Activated CD8-positive, alpha-beta memory T cell treated with anti-CD3 and anti-CD28 coated beads, Interleukin-2, amount 10 ng/mL, durations not matched to agents 7 days and 5 days (primary cell): ENCODE measurements at regions of chr21 and their contacts with region 1.

Region 1: DNA sequence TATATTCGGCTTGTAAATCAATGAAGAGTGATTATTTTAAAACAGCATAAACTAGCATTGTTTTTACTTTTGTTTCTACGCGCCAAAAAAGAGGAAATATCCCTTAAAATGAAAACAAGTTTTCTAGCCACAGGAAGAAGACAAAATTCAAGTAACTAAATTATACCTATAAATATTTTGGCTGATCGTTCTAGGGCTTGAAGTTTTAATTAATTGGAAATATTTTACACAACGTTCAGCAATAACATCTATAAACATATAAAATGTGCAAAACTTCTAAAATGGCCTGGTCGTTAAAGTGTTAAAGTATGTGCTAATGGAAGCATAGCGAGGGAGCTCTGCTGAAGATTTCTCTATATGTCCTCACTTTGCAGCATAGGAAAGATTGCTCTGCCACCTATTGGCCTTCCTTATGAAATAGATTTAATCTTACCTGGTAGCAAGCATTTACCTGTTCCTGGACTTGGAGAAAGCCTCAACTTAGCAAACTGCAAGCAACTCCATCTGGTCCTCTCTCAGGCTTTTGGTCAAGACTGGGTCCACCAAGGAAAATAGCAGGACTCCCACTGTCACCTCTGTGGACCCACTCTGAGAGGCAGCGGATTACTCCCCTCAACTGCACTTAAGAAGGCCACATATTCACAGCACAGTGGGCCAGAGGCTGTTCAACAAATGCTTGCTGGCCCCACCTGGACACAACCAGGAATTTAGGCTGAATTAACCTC is 351.3 kb upstream of the RUNX1 start:
- DNase-seq: peak; percentile 46
- ATAC-seq: peak; percentile 80
- H3K4me3 Mint-ChIP-seq: no peak overlapping the region
- H3K27ac Mint-ChIP-seq: no peak overlapping the region
- H3K4me1 Mint-ChIP-seq: peaks cover 13% of the 10 kb centered on the region
- H3K27me3 Mint-ChIP-seq: peaks cover 34% of the 10 kb centered on the region

Region 2: DNA sequence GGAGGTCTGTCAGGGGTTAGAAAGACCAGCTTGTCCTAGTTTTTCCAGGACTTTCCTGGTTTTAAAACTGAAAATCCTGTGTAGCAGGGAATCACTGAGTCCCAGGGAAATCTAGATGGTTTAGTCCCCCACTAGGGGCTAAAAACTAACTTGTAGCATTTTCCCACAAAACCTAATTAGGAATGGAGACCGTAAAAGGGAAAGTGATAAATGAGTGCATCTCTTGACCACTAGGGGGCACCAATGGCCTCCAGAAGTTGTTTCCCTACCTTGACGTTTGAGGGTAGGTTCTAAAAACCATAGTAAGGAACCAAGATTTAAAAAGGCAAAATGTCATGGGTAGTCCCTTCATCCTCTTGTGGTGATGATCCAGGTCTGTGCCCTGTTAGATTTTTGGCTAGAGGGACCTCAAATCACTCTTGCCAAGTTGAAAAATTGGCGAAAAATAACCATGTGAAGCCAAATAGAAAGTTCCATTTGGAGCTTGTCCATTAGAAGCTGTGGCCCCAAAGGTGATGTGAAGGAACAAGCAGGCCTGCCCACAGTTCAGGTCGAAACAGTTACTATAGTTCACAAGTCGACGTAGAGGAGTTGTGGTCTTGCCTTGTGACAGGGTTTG is 707.1 kb before region 1 on chr21:
- CTCF ChIA-PET with region 1: interaction called, 14 read pairs
- DNase-seq: peak; percentile 51
- ATAC-seq: no peak
- H3K4me3 Mint-ChIP-seq: no peak overlapping the region
- H3K27ac Mint-ChIP-seq: no peak overlapping the region
- H3K4me1 Mint-ChIP-seq: no peaks in the 10 kb centered on the region
- H3K27me3 Mint-ChIP-seq: peaks cover 67% of the 10 kb centered on the region

Region 3: DNA sequence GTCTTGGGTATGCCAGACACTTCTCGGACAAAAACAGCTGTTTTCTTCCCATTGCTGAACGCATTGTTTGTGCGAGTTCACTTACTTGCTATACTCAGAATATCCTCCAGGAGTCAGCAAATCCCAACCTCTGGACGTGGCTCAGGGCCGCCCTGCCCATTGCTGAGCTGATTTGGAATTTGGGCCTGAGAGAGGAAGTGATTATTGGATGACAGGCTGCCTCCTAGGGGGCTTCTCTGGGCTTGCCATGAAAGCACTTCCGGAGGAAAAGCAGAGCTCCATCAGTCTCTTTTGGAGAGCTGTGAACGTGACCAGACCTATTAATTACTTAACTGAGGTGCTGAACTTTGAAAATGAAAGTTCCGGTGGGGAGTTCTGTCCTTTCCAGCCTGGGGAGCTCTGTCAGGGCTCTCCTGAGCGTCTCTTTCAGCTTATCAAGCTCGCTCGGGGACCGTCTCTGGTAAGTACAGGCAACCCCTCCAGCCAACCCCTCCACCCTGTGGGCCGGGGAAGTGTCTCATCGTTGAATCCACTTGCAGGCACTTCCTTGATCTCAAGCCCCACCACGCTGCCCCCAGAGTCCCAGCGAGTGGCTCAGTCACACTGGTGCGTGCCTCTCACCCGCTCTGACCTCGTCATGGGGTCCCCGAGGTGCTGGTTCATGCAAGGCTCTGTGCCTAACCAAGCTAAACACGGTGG is 654.7 kb before region 1 on chr21:
- CTCF ChIA-PET with region 1: interaction called, 17 read pairs
- DNase-seq: peak; percentile 66
- ATAC-seq: peak; percentile 81
- H3K4me3 Mint-ChIP-seq: no peak overlapping the region
- H3K27ac Mint-ChIP-seq: no peak overlapping the region
- H3K4me1 Mint-ChIP-seq: peaks cover 4% of the 10 kb centered on the region
- H3K27me3 Mint-ChIP-seq: peaks cover 28% of the 10 kb centered on the region

Region 4: DNA sequence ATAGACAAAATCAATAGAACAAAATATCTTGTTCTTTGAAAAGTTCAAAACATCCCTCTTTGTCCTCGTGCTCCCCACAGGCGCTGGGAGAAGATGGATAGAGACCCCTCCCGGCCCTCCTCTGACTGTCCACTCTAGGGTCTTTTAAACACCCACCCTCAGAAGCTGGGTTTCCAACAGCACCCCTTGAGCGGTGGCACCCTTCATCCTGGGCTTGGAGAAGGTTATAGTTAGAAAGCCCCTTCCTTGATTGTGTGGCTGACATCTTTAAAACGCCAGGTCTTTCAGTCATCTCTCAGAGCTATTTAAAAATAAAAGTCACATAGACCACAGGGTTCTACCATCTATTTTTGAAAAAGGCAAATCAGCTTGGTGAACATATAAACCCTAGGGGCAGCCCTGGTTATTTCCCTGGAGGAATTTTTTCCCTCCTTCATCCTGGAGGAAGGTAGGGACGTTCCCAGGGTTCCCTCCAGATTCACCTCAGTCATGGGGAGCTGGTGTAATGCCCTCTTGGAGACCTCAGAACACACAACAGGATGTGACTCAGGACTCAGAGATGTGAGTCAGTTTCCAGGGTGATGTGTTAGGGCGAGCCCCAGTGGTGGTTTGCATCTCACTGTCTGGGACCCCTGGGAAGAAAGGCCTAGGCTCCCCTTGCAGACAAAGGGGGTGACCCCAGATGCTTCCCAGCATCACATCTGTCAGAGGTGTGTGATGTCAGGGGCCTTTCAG is 593.1 kb before region 1 on chr21:
- CTCF ChIA-PET with region 1: interaction called, 11 read pairs
- DNase-seq: peak; percentile 85
- ATAC-seq: peak; percentile 89
- H3K4me3 Mint-ChIP-seq: no peak overlapping the region
- H3K27ac Mint-ChIP-seq: peak overlapping the region; percentile 84
- H3K4me1 Mint-ChIP-seq: peaks cover 75% of the 10 kb centered on the region
- H3K27me3 Mint-ChIP-seq: no peaks in the 10 kb centered on the region

Region 5: GRCh38 chr21:35467566-35467965 is 67.2 kb after region 1 on chr21:
- CTCF ChIA-PET with region 1: no interaction called
- DNase-seq: no peak
- ATAC-seq: no peak
- H3K4me3 Mint-ChIP-seq: no peak overlapping the region
- H3K27ac Mint-ChIP-seq: no peak overlapping the region
- H3K4me1 Mint-ChIP-seq: no peaks in the 10 kb centered on the region
- H3K27me3 Mint-ChIP-seq: peaks cover 8% of the 10 kb centered on the region